ENCODE measurements at regions of chr1 and their contacts with region 1.

Region 1: GRCh38 chr1:228150461-228151179 is 890 bp downstream of the GJC2 start:
- DNase-seq: peak; percentile 44
- H3K27ac ChIP-seq: peak overlapping the region; percentile 100
- CTCF ChIP-seq: no peak

Region 2: GRCh38 chr1:227401562-227402342 is 748.9 kb before region 1 on chr1:
- CTCF ChIA-PET with region 1: no interaction called
- POLR2A ChIA-PET with region 1: no interaction called
- DNase-seq: no peak
- H3K27ac ChIP-seq: no peak overlapping the region
- CTCF ChIP-seq: no peak

Region 3: DNA sequence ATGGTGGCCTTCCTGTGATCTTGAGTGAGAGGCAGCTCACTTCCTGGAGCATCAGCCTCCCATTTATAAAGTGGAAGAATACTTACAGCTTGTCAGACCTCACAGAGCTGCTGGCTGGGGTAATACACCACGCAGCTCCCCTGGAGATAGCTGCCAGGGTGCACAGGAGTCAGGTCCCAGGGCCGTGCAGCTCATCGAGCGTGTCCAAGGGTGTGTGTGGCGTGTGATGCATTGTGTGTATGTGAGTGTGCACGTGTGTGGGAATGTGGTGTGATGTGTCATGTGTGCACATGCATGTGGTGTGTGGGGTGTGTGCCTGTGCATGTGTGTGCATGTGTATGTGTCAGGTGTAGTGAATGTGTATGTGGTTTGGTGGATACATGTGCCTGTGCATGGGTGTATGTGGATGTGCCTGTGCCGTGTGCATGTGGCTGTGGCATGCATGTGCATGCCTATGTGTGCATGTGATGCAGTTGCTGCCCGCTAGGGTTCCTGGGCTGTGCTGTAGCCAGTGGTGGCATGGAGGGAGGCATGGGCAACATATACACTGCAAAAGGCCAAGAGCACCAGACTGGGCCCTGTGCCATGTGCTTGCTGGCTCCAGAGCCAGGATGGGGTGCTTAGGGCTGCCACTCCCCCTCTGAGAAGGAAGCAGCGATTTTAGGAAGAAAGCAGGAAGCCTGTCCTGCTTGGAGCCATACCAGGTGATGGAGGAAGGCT is 119.2 kb before region 1 on chr1:
- CTCF ChIA-PET with region 1: no interaction called
- POLR2A ChIA-PET with region 1: no interaction called
- DNase-seq: no peak
- H3K27ac ChIP-seq: no peak overlapping the region
- CTCF ChIP-seq: no peak

Region 4: DNA sequence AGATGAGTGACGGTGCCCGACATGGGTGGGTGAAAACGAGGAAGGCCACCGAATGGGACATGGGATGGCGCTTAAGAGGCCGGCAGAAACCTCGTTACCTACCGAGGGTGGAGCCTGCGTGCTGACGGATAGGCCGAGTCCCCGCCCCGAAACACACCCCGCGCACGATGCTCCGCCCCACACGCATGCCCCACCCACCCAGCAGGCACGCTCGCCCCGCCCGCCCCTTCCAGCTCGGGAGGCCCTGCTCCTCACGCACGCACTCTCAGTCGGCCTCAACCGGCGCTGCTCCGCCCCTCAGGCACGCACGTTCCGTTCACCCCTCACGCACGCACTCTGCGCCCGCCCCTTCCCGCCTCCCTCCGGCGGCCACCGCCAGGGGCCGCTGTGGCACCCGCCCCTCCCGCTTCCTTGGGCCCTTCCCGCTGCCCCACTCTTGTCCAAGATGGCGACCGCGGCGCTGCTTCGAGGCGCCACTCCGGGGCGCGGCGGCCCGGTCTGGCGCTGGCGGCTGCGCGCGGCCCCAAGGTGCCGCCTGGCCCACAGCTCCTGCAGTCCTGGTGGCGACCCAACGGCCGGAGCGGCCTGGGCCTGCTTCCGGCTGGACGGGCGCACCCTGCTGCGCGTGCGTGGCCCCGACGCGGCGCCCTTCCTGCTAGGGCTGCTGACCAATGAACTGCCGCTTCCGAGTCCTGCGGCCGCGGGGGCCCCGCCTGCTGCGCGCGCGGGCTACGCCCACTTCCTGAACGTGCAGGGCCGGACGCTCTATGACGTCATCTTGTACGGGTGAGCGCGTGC is 15.0 kb after region 1 on chr1 and contains the start of gene IBA57:
- CTCF ChIA-PET with region 1: interaction called, 4 read pairs
- POLR2A ChIA-PET with region 1: interaction called, 11 read pairs
- DNase-seq: peak; percentile 96
- H3K27ac ChIP-seq: peak within 1 kb of the TSS; percentile 100
- CTCF ChIP-seq: peak; percentile 95

Region 5: GRCh38 chr1:229128066-229128608 is 977.5 kb after region 1 on chr1:
- CTCF ChIA-PET with region 1: no interaction called
- POLR2A ChIA-PET with region 1: interaction called, 10 read pairs
- DNase-seq: no peak
- H3K27ac ChIP-seq: no peak overlapping the region
- CTCF ChIP-seq: no peak

Measured in RWPE1 (cell line).